Activated CD8-positive, alpha-beta T cell treated with anti-CD3 and anti-CD28 coated beads for 36 hours (primary cell): ENCODE measurements at regions of chr5 and their contacts with region 1.

Region 1: GRCh38 chr5:1161833-1162229 is 39.6 kb upstream of the SLC6A19 start:
- DNase-seq: no peak
- ATAC-seq: no peak
- H3K4me3 Mint-ChIP-seq: no peak overlapping the region
- H3K27ac Mint-ChIP-seq: no peak overlapping the region
- H3K4me1 Mint-ChIP-seq: no peaks in the 10 kb centered on the region
- H3K27me3 Mint-ChIP-seq: peaks cover 25% of the 10 kb centered on the region
- CTCF ChIP-seq: no peak

Region 2: GRCh38 chr5:1068204-1068894 is 93.5 kb before region 1 on chr5:
- CTCF ChIA-PET with region 1: no interaction called
- POLR2A ChIA-PET with region 1: no interaction called
- intact Hi-C with region 1: no loop called
- DNase-seq: no peak
- ATAC-seq: no peak
- H3K4me3 Mint-ChIP-seq: no peak overlapping the region
- H3K27ac Mint-ChIP-seq: no peak overlapping the region
- H3K4me1 Mint-ChIP-seq: no peaks in the 10 kb centered on the region
- H3K27me3 Mint-ChIP-seq: no peaks in the 10 kb centered on the region
- CTCF ChIP-seq: no peak

Region 3: GRCh38 chr5:1174122-1174936 is 12.5 kb after region 1 on chr5:
- CTCF ChIA-PET with region 1: interaction called, 19 read pairs
- POLR2A ChIA-PET with region 1: no interaction called
- intact Hi-C with region 1: no loop called
- DNase-seq: peak; percentile 64
- ATAC-seq: peak; percentile 64
- H3K4me3 Mint-ChIP-seq: no peak overlapping the region
- H3K27ac Mint-ChIP-seq: no peak overlapping the region
- H3K4me1 Mint-ChIP-seq: peaks cover 5% of the 10 kb centered on the region
- H3K27me3 Mint-ChIP-seq: no peaks in the 10 kb centered on the region
- CTCF ChIP-seq: peak; percentile 74

Region 4: GRCh38 chr5:1294206-1294834 is 132.5 kb after region 1 on chr5:
- CTCF ChIA-PET with region 1: no interaction called
- POLR2A ChIA-PET with region 1: no interaction called
- intact Hi-C with region 1: no loop called
- DNase-seq: peak; percentile 22
- ATAC-seq: peak; percentile 31
- H3K4me3 Mint-ChIP-seq: peak overlapping the region; percentile 56
- H3K27ac Mint-ChIP-seq: no peak overlapping the region
- H3K4me1 Mint-ChIP-seq: peaks cover 6% of the 10 kb centered on the region
- H3K27me3 Mint-ChIP-seq: no peaks in the 10 kb centered on the region
- CTCF ChIP-seq: no peak